ENCODE measurements at regions of chr1 and their contacts with region 1.

Region 1: DNA sequence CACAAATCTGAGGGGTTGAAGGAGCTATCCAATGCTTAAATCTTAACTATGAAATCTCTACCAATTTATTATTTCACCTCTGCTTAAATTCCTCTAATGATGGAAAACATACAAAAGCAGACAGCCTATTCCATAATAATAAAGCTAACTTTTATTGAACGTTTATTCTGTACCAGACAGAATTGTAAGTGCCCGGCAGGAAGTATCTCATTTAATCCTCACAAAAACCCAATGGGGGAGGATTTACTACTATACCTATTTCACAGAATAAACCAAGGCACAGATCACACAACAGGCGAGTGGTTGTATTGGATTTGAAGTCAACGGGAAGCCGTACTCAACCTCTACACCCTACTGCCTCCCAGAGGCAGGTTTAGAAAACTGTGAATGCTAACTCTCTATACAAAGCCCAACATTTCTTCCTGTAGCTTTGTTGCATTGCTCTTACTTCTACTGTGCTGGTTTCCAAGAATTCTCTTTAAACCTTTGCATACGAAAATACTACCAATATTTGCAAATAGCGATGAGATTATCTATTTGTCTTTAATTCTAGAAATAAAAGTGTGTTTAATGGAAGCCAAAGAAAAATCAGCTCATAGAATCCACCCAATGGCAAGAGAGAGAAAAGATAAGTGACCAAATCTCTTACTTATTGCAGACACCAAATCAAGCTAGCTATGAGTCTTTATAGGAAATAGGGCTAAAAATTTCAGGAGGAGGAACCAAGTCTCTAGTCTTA is 33.5 kb upstream of the C1orf53 start:
- DNase-seq: no peak
- H3K4me3 ChIP-seq: no peak overlapping the region
- H3K27ac ChIP-seq: no peak overlapping the region
- H3K4me1 ChIP-seq: no peaks in the 10 kb centered on the region
- H3K27me3 ChIP-seq: peaks cover 0 to 4% (median 0%) of the 10 kb centered on the region in 4 donors
- CTCF ChIP-seq: peak; percentile 36 to 56 (median 46)
- EP300 ChIP-seq: no peak
- POLR2A ChIP-seq: no peak

Region 2: GRCh38 chr1:197521118-197521739 is 347.7 kb before region 1 on chr1:
- intact Hi-C with region 1: loop called (anchors 10 kb)
- DNase-seq: no peak
- H3K4me3 ChIP-seq: no peak overlapping the region
- H3K27ac ChIP-seq: no peak overlapping the region
- H3K4me1 ChIP-seq: no peaks in the 10 kb centered on the region
- H3K27me3 ChIP-seq: no peaks in the 10 kb centered on the region
- CTCF ChIP-seq: peak; percentile 42 to 56 (median 45)
- EP300 ChIP-seq: no peak
- POLR2A ChIP-seq: no peak

Region 3: GRCh38 chr1:197614916-197615692 is 253.8 kb before region 1 on chr1:
- intact Hi-C with region 1: loop called (anchors 5 kb)
- DNase-seq: no peak
- H3K4me3 ChIP-seq: no peak overlapping the region
- H3K27ac ChIP-seq: no peak overlapping the region
- H3K4me1 ChIP-seq: peaks cover 0 to 5% (median 0%) of the 10 kb centered on the region in 4 donors
- H3K27me3 ChIP-seq: no peaks in the 10 kb centered on the region
- CTCF ChIP-seq: peak; percentile 42 to 56 (median 43)
- EP300 ChIP-seq: no peak
- POLR2A ChIP-seq: no peak

Measured in esophagus muscularis mucosa (tissue), 4 donors.